CD4-positive, alpha-beta memory T cell (primary cell): ENCODE measurements at regions of chr14 and their contacts with region 1.

Region 1: DNA sequence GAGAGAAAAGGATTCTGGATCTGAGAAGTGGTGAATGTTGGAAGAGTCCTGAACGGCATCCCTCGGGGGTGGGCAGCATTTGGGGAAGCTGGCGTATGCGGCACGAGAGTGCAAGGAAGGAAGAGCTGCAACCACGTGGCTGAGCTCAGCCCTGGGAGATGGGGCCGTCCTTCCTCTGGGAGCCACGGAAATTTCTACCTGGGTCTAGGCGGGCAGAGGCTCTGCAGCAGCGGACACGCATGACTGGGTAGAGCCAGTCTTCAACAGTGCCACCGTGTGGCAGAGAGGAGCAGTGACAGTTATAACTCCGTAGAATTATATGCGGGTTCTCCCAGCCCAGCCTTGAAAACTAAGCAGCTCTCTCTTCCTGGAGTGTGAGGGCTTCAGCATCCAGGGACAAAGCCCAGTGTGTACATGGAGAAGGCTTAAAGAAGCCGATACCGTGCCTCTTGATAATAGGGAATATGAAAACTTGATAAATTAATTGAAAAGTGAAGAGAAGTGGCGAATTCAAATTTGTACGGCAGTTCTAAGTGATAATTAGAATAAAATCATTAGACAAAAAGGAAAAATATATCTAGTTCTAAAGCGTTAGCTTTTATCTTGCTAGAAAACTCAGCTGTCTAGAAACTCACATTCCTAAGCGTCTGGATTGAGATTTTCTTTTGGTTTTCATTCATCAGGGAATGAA is 82.9 kb upstream of the STXBP6 start:
- DNase-seq: peak; percentile 25 to 43 (median 38)
- H3K4me3 ChIP-seq: no peak overlapping the region
- H3K4me3 Mint-ChIP-seq: peak overlapping the region in 1 of 8 donors; percentile 27
- H3K27ac ChIP-seq: no peak overlapping the region
- H3K27ac Mint-ChIP-seq: peak overlapping the region in 1 of 7 donors; percentile 4
- H3K4me1 ChIP-seq: peaks cover 4% of the 10 kb centered on the region
- H3K4me1 Mint-ChIP-seq: peaks cover 0 to 6% (median 2%) of the 10 kb centered on the region in 4 donors
- H3K27me3 ChIP-seq: no peaks in the 10 kb centered on the region
- H3K27me3 Mint-ChIP-seq: peaks cover 22 to 30% of the 10 kb centered on the region in 2 donors

Region 2: GRCh38 chr14:24481622-24482324 is 651.1 kb before region 1 on chr14:
- CTCF ChIA-PET with region 1: interaction called, 4 read pairs
- POLR2A ChIA-PET with region 1: no interaction called
- intact Hi-C with region 1: loop called (anchors 5 kb)
- DNase-seq: peak in 4 of 5 donors; percentile 18 to 38 (median 25)
- H3K4me3 ChIP-seq: no peak overlapping the region
- H3K4me3 Mint-ChIP-seq: peak overlapping the region in 5 of 8 donors; percentile 38 to 61 (median 51)
- H3K27ac ChIP-seq: no peak overlapping the region
- H3K27ac Mint-ChIP-seq: peak overlapping the region in 4 of 7 donors; percentile 4 to 57 (median 26)
- H3K4me1 ChIP-seq: peaks cover 17% of the 10 kb centered on the region
- H3K4me1 Mint-ChIP-seq: peaks cover 0 to 29% (median 20%) of the 10 kb centered on the region in 4 donors
- H3K27me3 ChIP-seq: no peaks in the 10 kb centered on the region
- H3K27me3 Mint-ChIP-seq: no peaks in the 10 kb centered on the region

Region 3: GRCh38 chr14:24710403-24711112 is 422.3 kb before region 1 on chr14:
- CTCF ChIA-PET with region 1: interaction called, 55 read pairs
- POLR2A ChIA-PET with region 1: no interaction called
- intact Hi-C with region 1: loop called (anchors 1 kb)
- DNase-seq: peak; percentile 26 to 53 (median 47)
- H3K4me3 ChIP-seq: no peak overlapping the region
- H3K4me3 Mint-ChIP-seq: no peak overlapping the region
- H3K27ac ChIP-seq: no peak overlapping the region
- H3K27ac Mint-ChIP-seq: peak overlapping the region in 1 of 7 donors; percentile 49
- H3K4me1 ChIP-seq: peaks cover 4% of the 10 kb centered on the region
- H3K4me1 Mint-ChIP-seq: no peaks in the 10 kb centered on the region
- H3K27me3 ChIP-seq: no peaks in the 10 kb centered on the region
- H3K27me3 Mint-ChIP-seq: peaks cover 2 to 6% of the 10 kb centered on the region in 2 donors

Region 4: GRCh38 chr14:25121337-25122122 is 11.3 kb before region 1 on chr14:
- CTCF ChIA-PET with region 1: interaction called, 17 read pairs
- POLR2A ChIA-PET with region 1: no interaction called
- intact Hi-C with region 1: no loop called
- DNase-seq: no peak
- H3K4me3 ChIP-seq: no peak overlapping the region
- H3K4me3 Mint-ChIP-seq: no peak overlapping the region
- H3K27ac ChIP-seq: no peak overlapping the region
- H3K27ac Mint-ChIP-seq: peak overlapping the region in 1 of 7 donors; percentile 23
- H3K4me1 ChIP-seq: no peaks in the 10 kb centered on the region
- H3K4me1 Mint-ChIP-seq: no peaks in the 10 kb centered on the region
- H3K27me3 ChIP-seq: no peaks in the 10 kb centered on the region
- H3K27me3 Mint-ChIP-seq: peaks cover 0 to 4% of the 10 kb centered on the region in 2 donors